ENCODE measurements at regions of chr20 and their contacts with region 1.

Region 1: GRCh38 chr20:34129518-34130162 is 17.6 kb upstream of the EIF2S2 start:
- DNase-seq: peak; percentile 88
- ATAC-seq: peak; percentile 91
- H3K4me3 ChIP-seq: peak overlapping the region; percentile 51
- H3K27ac ChIP-seq: no peak overlapping the region
- H3K4me1 ChIP-seq: peaks cover 4% of the 10 kb centered on the region; the same call in 1 of the 2 replicates
- H3K27me3 ChIP-seq: no peaks in the 10 kb centered on the region
- CTCF ChIP-seq: peak; percentile 87

Region 2: DNA sequence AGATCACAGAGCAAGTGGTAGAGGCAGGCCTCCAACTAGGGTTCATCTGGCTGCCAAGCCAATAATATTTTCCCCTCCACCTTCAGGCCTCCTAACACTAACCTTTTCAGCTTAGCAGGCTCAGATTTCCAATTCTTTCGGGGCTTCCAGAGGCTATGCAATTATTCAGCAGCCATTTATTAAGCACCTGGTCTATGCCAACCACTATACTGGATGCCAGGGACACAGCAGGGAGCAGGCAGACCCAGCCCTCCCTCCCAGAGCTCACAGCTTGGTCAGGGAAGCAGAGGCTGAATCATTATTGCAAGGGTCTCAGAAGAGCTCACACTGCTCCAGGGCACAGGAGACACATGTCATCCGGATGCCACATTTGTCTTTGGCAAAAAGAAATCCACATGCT is 845.4 kb before region 1 on chr20:
- CTCF ChIA-PET with region 1: no interaction called
- POLR2A ChIA-PET with region 1: interaction called, 10 read pairs
- intact Hi-C with region 1: no loop called
- DNase-seq: no peak
- ATAC-seq: no peak
- H3K4me3 ChIP-seq: no peak overlapping the region
- H3K27ac ChIP-seq: no peak overlapping the region
- H3K4me1 ChIP-seq: peaks cover 6% of the 10 kb centered on the region; the same call in 1 of the 2 replicates
- H3K27me3 ChIP-seq: peaks cover 38% of the 10 kb centered on the region; the same call in 1 of the 2 replicates
- CTCF ChIP-seq: no peak

Region 3: GRCh38 chr20:33862709-33863403 is 266.8 kb before region 1 on chr20:
- CTCF ChIA-PET with region 1: no interaction called
- POLR2A ChIA-PET with region 1: no interaction called
- intact Hi-C with region 1: loop called (anchors 2 kb)
- DNase-seq: peak; percentile 49
- ATAC-seq: peak; percentile 69
- H3K4me3 ChIP-seq: peak overlapping the region; percentile 35; the same call in 1 of the 2 replicates
- H3K27ac ChIP-seq: no peak overlapping the region
- H3K4me1 ChIP-seq: peaks cover 4% of the 10 kb centered on the region; the same call in 1 of the 2 replicates
- H3K27me3 ChIP-seq: no peaks in the 10 kb centered on the region
- CTCF ChIP-seq: peak; percentile 88

Region 4: DNA sequence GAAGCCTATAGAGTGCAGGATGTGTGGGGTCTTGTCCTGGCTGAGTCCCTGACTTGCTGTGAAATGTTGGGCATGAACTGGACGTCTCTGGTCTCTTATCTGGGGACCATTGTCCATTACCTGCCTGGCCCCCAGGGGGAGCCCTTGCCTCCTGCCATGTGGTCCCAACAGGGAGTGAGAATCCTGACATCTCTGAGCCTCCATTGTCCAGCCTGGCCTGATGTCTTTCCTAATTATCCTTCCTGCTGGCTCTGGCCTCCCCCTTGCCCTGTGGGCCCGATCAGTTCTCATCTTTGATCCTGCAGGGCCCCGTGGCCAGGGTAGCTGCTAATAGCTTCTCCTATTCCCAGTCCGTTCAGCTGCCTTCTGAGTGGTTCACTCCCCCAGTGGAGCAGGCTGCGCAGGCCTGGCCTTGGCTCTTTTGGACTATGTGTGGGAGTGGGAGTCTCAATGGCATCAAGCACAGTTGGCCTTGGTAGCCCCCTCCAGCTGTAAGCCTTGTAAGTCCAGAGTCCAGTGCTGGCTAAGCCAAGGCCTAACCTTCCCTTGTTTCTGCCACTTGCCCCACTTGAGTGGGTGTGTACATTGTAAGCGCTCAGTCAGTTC is 213.8 kb before region 1 on chr20:
- CTCF ChIA-PET with region 1: no interaction called
- POLR2A ChIA-PET with region 1: no interaction called
- intact Hi-C with region 1: loop called (anchors 1 kb)
- DNase-seq: peak; percentile 51
- ATAC-seq: peak; percentile 68
- H3K4me3 ChIP-seq: no peak overlapping the region
- H3K27ac ChIP-seq: no peak overlapping the region
- H3K4me1 ChIP-seq: 0 out of 2 replicates have a peak, but pooled peaks cover 4% of the 10 kb centered on the region
- H3K27me3 ChIP-seq: no peaks in the 10 kb centered on the region
- CTCF ChIP-seq: peak; percentile 74

Region 5: DNA sequence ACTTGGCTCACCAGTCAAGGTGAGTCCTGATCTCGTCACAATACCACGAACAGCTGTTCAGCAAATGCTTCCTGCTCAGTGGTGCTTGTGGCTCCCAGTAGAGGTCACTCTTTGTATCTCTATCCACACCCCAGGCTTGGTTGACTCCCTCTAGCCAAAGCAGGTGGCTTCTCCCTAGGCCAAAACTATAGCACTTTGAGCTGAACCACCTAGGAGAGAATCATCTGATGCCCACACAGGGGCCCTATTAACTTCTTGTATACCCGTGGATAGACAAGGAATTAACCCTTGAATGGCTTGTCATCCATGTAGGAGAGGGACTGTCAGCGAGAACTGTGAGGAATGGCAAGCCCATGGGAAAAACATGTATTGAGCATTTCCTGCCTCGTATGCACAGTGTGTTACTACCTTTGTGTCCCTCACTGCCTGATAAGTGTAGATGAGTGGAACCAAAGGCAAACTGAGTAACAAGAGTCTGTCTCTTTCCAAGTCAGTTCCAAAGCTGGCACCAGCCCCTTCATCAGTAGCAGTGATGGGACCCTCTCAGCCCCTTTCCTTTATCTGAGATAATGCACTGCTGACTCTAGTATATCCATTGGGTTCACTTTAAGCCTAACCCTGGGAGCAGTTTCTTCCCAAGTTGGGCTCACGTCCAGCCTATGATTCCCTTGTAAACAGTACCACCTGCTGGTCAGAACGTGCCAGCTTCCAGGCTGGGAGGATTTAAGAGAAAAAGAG is 60.1 kb before region 1 on chr20:
- CTCF ChIA-PET with region 1: no interaction called
- POLR2A ChIA-PET with region 1: no interaction called
- intact Hi-C with region 1: loop called (anchors 1 kb)
- DNase-seq: peak; percentile 91
- ATAC-seq: peak; percentile 84
- H3K4me3 ChIP-seq: no peak overlapping the region
- H3K27ac ChIP-seq: no peak overlapping the region
- H3K4me1 ChIP-seq: peaks cover 6% of the 10 kb centered on the region
- H3K27me3 ChIP-seq: no peaks in the 10 kb centered on the region
- CTCF ChIP-seq: peak; percentile 91

Region 6: GRCh38 chr20:34180460-34181120 is 51.0 kb after region 1 on chr20:
- CTCF ChIA-PET with region 1: no interaction called
- POLR2A ChIA-PET with region 1: no interaction called
- intact Hi-C with region 1: no loop called
- DNase-seq: peak; percentile 40
- ATAC-seq: peak; percentile 18; the same call in 1 of the 2 replicates
- H3K4me3 ChIP-seq: no peak overlapping the region
- H3K27ac ChIP-seq: no peak overlapping the region
- H3K4me1 ChIP-seq: no peaks in the 10 kb centered on the region
- H3K27me3 ChIP-seq: peaks cover 19% of the 10 kb centered on the region
- CTCF ChIP-seq: no peak

Region 7: DNA sequence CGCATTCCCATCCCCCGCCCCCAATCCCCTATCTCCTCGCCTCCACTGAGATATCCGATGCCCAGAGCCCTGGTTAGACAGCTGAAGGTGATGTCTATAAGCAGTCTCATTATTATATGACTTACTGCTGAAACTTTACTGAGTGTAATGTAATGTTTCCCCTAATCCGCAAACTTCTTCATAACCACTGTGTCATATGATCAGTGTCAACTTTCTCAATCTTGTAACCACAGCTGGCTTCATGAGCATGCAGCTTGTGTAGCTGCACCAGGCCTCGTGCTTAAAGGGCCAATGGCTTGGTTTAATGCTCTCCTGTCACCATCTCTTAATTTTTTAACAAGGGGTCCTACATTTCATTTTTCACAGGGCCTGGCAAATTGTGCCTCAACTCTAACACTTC is 119.7 kb after region 1 on chr20:
- CTCF ChIA-PET with region 1: no interaction called
- POLR2A ChIA-PET with region 1: no interaction called
- intact Hi-C with region 1: no loop called
- DNase-seq: no peak
- ATAC-seq: no peak
- H3K4me3 ChIP-seq: no peak overlapping the region
- H3K27ac ChIP-seq: no peak overlapping the region
- H3K4me1 ChIP-seq: no peaks in the 10 kb centered on the region
- H3K27me3 ChIP-seq: no peaks in the 10 kb centered on the region
- CTCF ChIP-seq: no peak

Measured in PC-3 (cell line).